ENCODE measurements at regions of chr3 and their contacts with region 1.

Region 1: DNA sequence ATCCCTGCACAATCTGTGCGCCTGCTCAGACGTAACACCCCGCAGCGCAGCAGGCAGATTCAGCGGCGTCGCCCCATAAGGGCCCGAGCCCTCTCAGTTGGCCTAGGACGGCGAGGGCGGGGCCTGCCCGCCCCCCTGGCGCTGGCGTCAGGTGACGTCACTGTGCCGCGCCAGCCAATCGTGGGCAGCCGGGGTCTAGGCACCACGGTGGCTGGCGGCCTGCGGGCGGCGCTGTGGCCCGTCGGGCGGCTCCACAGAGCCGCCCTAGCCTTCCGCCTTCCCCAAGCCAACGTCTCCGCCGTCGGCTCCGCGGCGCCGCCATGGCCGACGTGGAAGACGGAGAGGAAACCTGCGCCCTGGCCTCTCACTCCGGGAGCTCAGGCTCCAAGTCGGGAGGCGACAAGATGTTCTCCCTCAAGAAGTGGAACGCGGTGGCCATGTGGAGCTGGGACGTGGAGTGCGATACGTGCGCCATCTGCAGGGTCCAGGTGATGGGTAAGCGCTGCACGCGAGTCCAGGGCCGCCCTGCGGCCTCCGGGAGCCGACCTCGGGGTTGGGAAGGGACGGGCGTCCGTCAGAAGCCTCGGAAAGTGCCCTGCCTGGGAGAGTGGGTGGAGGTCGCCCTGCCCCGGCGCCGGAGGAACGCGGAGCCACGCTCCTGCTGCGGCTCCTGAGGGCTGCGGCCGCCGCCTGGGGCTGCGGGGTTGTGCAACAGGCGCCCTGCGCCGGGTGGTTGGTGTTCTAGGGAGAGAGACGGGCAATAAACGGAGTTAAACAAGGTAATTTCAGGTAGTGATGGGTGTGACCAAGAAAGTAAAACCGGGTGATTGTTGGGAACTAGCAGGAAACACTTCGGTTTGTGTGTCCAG is at the start of gene RNF7:
- DNase-seq: peak; percentile 92 to 96
- ATAC-seq: peak; percentile 97 to 100 (median 98)
- H3K4me3 ChIP-seq: peak within 1 kb of the TSS; percentile 78 to 99 (median 92)
- H3K27ac ChIP-seq: peak within 1 kb of the TSS; percentile 84 to 98 (median 95)
- H3K4me1 ChIP-seq: peaks cover 9 to 48% (median 36%) of the 10 kb centered on the region in 9 donors
- H3K27me3 ChIP-seq: no peaks in the 10 kb centered on the region
- CTCF ChIP-seq: peak; percentile 80 to 99 (median 94)
- total RNA-seq, gene RNF7: 77.2 to 95.8 (median 82.2) TPM

Region 2: DNA sequence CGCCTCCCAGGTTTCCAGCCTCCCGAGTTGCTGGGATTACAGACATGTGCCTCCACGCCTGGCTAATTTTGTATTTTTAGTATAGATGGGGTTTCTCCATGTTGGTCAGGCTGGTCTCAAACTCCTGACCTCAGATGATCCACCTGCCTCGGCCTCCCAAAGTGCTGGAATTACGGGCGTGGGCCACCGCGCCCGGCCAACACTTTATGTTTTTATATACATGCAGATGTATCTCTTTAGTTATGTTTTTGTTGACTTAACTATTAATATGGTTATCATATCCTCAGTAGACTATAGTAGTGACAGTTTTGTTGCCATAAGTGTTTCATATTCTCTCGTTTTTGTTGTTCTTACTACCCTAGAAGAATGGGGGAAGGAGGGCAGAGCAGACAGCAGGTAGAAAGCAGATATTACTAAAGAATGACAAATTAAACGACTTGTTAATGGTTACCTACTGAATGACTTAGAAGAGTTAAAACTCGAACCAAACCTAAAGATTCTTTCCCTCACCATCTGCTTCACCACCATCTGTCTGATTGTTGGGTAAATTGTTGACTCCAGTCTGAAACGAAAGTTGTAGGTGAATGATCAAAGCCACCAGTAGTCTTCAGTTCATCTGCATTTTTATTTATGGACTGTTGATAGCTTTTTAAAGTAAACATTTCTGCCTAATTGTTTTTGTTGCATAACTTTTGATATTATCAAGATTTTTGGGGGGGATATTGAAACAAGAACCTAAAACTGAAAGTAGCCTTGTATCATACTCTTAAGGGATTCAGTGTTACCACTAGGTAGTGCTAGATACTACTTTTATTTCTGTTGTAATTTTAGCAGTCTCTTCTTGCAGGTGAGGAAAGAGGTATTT is 162.1 kb before region 1 on chr3:
- intact Hi-C with region 1: loop called in 5 of 10 experiments (anchors 5 to 10 kb)
- DNase-seq: no peak
- ATAC-seq: peak in 4 of 8 donors; percentile 57 to 64 (median 60)
- H3K4me3 ChIP-seq: no peak overlapping the region
- H3K27ac ChIP-seq: peak overlapping the region in 1 of 10 donors; percentile 10
- H3K4me1 ChIP-seq: peaks cover 0 to 6% (median 0%) of the 10 kb centered on the region in 9 donors
- H3K27me3 ChIP-seq: no peaks in the 10 kb centered on the region
- CTCF ChIP-seq: peak in 8 of 9 donors; percentile 23 to 73 (median 60)

Region 3: DNA sequence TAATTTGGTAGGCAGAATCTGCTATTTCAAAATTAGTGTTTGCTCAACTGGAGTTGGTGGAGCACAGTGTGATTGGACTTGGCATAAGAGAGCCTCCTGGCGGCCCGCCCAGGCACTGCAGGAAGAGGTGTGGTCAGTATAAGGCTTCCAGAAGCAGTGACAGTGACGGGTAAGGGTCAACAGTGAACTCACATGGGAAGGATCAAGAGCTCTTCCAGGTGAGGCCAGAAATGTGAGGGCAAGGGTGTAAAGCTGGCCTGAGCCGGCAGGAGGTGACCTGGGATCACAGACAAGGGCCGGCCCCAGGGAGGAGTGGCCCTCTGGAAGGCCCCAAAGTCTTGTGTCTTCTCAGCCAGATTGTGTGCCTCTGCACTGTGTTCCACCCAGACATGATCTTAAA is 93.3 kb before region 1 on chr3:
- intact Hi-C with region 1: loop called in 2 of 10 experiments (anchors 10 kb)
- DNase-seq: peak; percentile 69 to 84
- ATAC-seq: peak; percentile 62 to 90 (median 80)
- H3K4me3 ChIP-seq: no peak overlapping the region
- H3K27ac ChIP-seq: no peak overlapping the region
- H3K4me1 ChIP-seq: peaks cover 0 to 7% (median 0%) of the 10 kb centered on the region in 9 donors
- H3K27me3 ChIP-seq: no peaks in the 10 kb centered on the region
- CTCF ChIP-seq: peak; percentile 34 to 82 (median 64)

Region 4: GRCh38 chr3:141686466-141687291 is 51.6 kb before region 1 on chr3:
- intact Hi-C with region 1: loop called in 1 of 10 experiments (anchors 5 kb)
- DNase-seq: peak; percentile 70 to 76
- ATAC-seq: peak; percentile 89 to 97 (median 94)
- H3K4me3 ChIP-seq: peak overlapping the region in 9 of 10 donors; percentile 8 to 52 (median 44)
- H3K27ac ChIP-seq: peak overlapping the region in 9 of 10 donors; percentile 12 to 84 (median 74)
- H3K4me1 ChIP-seq: peaks cover 2 to 46% (median 11%) of the 10 kb centered on the region in 9 donors
- H3K27me3 ChIP-seq: no peaks in the 10 kb centered on the region
- CTCF ChIP-seq: no peak

Region 5: DNA sequence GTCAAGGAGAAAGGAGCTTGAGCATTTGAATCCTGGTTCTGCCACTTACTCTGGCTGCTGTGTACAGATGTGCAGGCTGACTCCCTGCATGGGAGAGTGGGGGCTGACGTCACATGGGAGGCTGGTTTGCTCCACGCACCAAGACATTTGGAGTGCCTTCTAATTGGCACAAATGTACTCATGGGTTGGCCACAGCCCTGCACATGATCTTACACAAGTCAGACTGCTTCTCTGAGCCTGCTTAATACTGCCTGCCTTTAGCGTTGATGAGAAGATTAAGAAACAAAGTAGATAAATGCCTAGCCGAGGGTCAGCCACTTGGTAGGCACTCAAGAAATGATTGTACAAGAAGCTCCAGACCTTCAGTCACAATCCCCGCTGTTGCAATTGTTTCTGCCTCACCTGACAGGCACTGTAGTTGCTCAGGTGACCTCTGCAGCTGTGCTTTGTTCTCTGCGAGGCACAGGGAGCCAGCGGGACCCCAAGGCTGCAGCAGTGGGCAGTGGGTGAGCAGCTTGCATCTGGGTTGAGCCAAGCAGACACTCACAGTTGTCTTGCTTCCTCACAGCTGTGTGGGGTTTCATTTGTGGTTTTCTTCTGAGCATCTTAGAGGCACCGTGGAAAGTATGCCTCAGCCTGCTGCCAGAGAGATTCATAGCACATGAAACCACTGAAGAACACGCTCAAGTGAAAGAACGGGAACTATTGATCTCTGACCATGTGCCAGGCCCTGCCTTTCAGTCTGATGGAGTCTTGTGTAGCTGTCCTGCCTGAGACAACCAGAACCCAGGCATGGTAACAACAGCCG is 58.0 kb after region 1 on chr3:
- intact Hi-C with region 1: loop called in 3 of 10 experiments (anchors 2 to 10 kb)
- DNase-seq: peak in 1 of 2 donors; percentile 34
- ATAC-seq: peak in 6 of 8 donors; percentile 2 to 72 (median 20)
- H3K4me3 ChIP-seq: peak overlapping the region in 5 of 10 donors; percentile 45 to 60 (median 56)
- H3K27ac ChIP-seq: peak overlapping the region in 9 of 10 donors; percentile 69 to 97 (median 85)
- H3K4me1 ChIP-seq: peaks cover 8 to 39% (median 28%) of the 10 kb centered on the region in 9 donors
- H3K27me3 ChIP-seq: no peaks in the 10 kb centered on the region
- CTCF ChIP-seq: no peak

Region 6: GRCh38 chr3:141913150-141913811 is 175.0 kb after region 1 on chr3:
- intact Hi-C with region 1: loop called in 7 of 10 experiments (anchors 1 to 10 kb)
- DNase-seq: peak in 1 of 2 donors; percentile 53
- ATAC-seq: peak in 6 of 8 donors; percentile 61 to 72 (median 64)
- H3K4me3 ChIP-seq: no peak overlapping the region
- H3K27ac ChIP-seq: no peak overlapping the region
- H3K4me1 ChIP-seq: no peaks in the 10 kb centered on the region
- H3K27me3 ChIP-seq: no peaks in the 10 kb centered on the region
- CTCF ChIP-seq: peak; percentile 44 to 84 (median 72)

Region 7: DNA sequence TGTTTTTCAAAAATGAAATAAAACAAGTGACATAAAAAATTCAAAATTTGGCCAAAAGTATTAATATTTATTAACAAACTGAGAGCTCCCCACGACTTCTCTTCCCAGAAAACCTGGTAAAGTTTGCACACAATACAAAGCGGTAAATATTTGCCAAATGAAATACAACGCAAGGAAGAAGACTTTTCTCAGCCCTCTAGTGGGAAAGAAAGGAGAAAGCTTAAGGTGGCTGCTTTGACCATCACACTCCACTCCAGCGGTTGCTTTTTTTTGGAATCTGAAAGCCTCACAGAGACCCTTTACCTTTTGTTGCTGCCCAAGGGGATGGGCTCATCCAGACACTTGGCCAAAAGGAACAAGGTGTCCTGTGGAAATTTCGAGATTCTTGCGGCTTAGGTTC is 488.2 kb after region 1 on chr3:
- intact Hi-C with region 1: loop called in 1 of 10 experiments (anchors 10 kb)
- DNase-seq: no peak
- ATAC-seq: no peak
- H3K4me3 ChIP-seq: no peak overlapping the region
- H3K27ac ChIP-seq: no peak overlapping the region
- H3K4me1 ChIP-seq: peaks cover 0 to 19% (median 13%) of the 10 kb centered on the region in 9 donors
- H3K27me3 ChIP-seq: no peaks in the 10 kb centered on the region
- CTCF ChIP-seq: no peak